HepG2 (cell line): ENCODE measurements at regions of chr15 and their contacts with region 1.

Region 1: GRCh38 chr15:49225613-49226281 is 55.7 kb downstream of the GALK2 start:
- DNase-seq: no peak
- ATAC-seq: peak; percentile 95
- H3K4me3 ChIP-seq: no peak overlapping the region
- H3K27ac ChIP-seq: no peak overlapping the region
- H3K4me1 ChIP-seq: no peaks in the 10 kb centered on the region
- H3K27me3 ChIP-seq: no peaks in the 10 kb centered on the region
- CTCF ChIP-seq: peak; percentile 67
- EP300 ChIP-seq: no peak
- POLR2A ChIP-seq: no peak
- RAD21 ChIP-seq: peak; percentile 54

Region 2: GRCh38 chr15:49155110-49155833 is 70.5 kb before region 1 on chr15 and contains the start of gene COPS2:
- CTCF ChIA-PET with region 1: no interaction called
- POLR2A ChIA-PET with region 1: no interaction called
- in situ Hi-C with region 1: no loop called
- intact Hi-C with region 1: loop called (anchors 2 kb)
- DNase-seq: peak; percentile 96
- ATAC-seq: peak; percentile 96
- H3K4me3 ChIP-seq: peak within 1 kb of the TSS; percentile 68 to 86 (median 82)
- H3K27ac ChIP-seq: peak within 1 kb of the TSS; percentile 76
- H3K4me1 ChIP-seq: peaks cover 31% of the 10 kb centered on the region
- H3K27me3 ChIP-seq: no peaks in the 10 kb centered on the region; a peak in 1 of 5 replicates
- CTCF ChIP-seq: peak; percentile 15
- EP300 ChIP-seq: 0 out of 4 replicates have a peak, but pooled peaks of 1 of the 2 experiments have one; percentile 35
- POLR2A ChIP-seq: peak; percentile 61 to 84; a peak in 3 of 4 replicates
- RAD21 ChIP-seq: no peak; the same call in 1 of the 2 replicates
- total RNA-seq, gene COPS2: 66.3 and 138 TPM in 2 replicates

Region 3: GRCh38 chr15:49279521-49280456 is 54.0 kb after region 1 on chr15:
- CTCF ChIA-PET with region 1: no interaction called
- POLR2A ChIA-PET with region 1: no interaction called
- in situ Hi-C with region 1: no loop called
- intact Hi-C with region 1: no loop called
- DNase-seq: no peak
- ATAC-seq: no peak
- H3K4me3 ChIP-seq: no peak overlapping the region
- H3K27ac ChIP-seq: no peak overlapping the region
- H3K4me1 ChIP-seq: no peaks in the 10 kb centered on the region
- H3K27me3 ChIP-seq: no peaks in the 10 kb centered on the region
- CTCF ChIP-seq: no peak
- EP300 ChIP-seq: no peak
- POLR2A ChIP-seq: no peak
- RAD21 ChIP-seq: no peak